ENCODE measurements at regions of chr15 and their contacts with region 1.

Region 1: GRCh38 chr15:101320501-101321052 is 25.5 kb upstream of the SNRPA1 start:
- DNase-seq: peak; percentile 64
- ATAC-seq: peak; percentile 90
- H3K4me3 Mint-ChIP-seq: peak overlapping the region; percentile 47; the same call in 1 of the 2 replicates
- H3K27ac Mint-ChIP-seq: no peak overlapping the region
- H3K4me1 Mint-ChIP-seq: peaks cover 6% of the 10 kb centered on the region
- H3K27me3 Mint-ChIP-seq: 0 out of 2 replicates have a peak, but pooled peaks cover 2% of the 10 kb centered on the region
- CTCF ChIP-seq: peak; percentile 42; the same call in 1 of the 2 replicates

Region 2: DNA sequence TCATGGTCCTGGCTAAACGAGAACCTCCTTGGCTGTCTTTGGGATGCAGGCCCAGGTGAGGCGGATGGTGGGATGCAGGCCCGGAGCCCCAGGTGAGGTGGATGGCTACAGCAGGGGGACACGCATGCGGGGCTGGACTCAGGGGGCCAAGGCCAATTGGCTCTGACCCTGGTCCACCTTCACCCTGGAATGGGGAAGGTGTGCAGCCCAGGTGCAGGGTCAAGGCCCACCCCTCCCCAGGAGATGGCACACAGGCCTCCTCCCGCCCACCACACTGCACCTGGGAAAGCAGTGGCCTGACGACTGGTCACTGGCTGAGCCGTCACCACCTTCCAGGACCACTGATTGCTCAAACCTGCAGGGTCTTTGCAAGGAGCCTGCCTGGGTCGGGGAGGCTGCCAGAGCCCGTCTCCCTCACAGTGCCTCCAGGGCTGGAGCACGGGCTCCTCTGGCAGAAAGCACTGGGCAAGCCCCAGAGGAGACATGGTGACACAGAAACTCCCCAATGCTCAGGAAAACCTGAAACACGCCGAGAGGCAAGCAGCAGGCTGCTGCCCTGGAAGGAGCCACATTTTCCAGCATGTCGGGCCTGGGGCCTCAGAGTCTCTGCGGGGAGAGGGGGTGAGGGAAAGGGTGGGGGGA is 241.8 kb before region 1 on chr15:
- CTCF ChIA-PET with region 1: no interaction called
- POLR2A ChIA-PET with region 1: no interaction called
- DNase-seq: no peak
- ATAC-seq: peak; percentile 10
- H3K4me3 Mint-ChIP-seq: no peak overlapping the region
- H3K27ac Mint-ChIP-seq: peak overlapping the region; percentile 99
- H3K4me1 Mint-ChIP-seq: peaks cover 60% of the 10 kb centered on the region
- H3K27me3 Mint-ChIP-seq: peaks cover 7% of the 10 kb centered on the region
- CTCF ChIP-seq: no peak

Region 3: DNA sequence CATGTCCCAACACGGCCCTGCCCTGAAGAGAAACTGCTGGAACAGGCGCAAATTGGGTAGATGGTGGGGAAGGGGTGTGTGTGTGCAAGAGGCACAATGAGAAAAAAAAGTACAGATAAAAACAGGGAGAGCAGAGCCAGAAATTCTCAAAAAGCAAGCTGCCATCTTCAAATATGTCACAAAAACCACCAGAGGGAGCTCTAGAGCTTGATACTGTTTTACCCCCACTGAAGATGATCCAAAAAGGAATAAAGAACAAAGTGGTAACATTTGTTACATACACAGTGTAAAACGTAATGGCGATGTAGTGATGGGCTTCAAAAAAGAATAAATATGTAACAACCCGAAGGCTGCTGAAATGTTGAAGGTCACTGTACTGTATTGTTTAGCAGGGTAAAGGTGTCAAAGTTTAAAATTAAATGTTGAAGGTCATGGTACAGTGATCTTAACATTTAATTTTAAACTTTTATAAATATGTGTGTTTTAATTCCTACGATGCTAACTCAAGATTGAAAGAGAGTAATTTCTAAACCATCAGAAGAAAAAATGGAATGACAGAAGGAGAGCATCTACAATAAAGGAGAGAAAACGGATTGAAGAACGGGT is 31.6 kb before region 1 on chr15:
- CTCF ChIA-PET with region 1: interaction called, 10 read pairs
- POLR2A ChIA-PET with region 1: no interaction called
- DNase-seq: no peak
- ATAC-seq: 0 out of 2 replicates have a peak, but pooled peaks have one; percentile 24
- H3K4me3 Mint-ChIP-seq: no peak overlapping the region
- H3K27ac Mint-ChIP-seq: no peak overlapping the region
- H3K4me1 Mint-ChIP-seq: peaks cover 10% of the 10 kb centered on the region
- H3K27me3 Mint-ChIP-seq: no peaks in the 10 kb centered on the region
- CTCF ChIP-seq: peak; percentile 64; the same call in 1 of the 2 replicates

Region 4: GRCh38 chr15:101332061-101332467 is 11.5 kb after region 1 on chr15:
- CTCF ChIA-PET with region 1: interaction called, 13 read pairs
- POLR2A ChIA-PET with region 1: no interaction called
- DNase-seq: no peak
- ATAC-seq: no peak
- H3K4me3 Mint-ChIP-seq: no peak overlapping the region
- H3K27ac Mint-ChIP-seq: no peak overlapping the region
- H3K4me1 Mint-ChIP-seq: no peaks in the 10 kb centered on the region
- H3K27me3 Mint-ChIP-seq: peaks cover 52% of the 10 kb centered on the region
- CTCF ChIP-seq: no peak

Region 5: GRCh38 chr15:101501703-101502373 is 181.3 kb after region 1 on chr15:
- CTCF ChIA-PET with region 1: interaction called, 19 read pairs
- POLR2A ChIA-PET with region 1: no interaction called
- DNase-seq: peak; percentile 66
- ATAC-seq: peak; percentile 91
- H3K4me3 Mint-ChIP-seq: no peak overlapping the region
- H3K27ac Mint-ChIP-seq: no peak overlapping the region
- H3K4me1 Mint-ChIP-seq: peaks cover 13% of the 10 kb centered on the region
- H3K27me3 Mint-ChIP-seq: no peaks in the 10 kb centered on the region; the same call in 1 of the 2 replicates
- CTCF ChIP-seq: 0 out of 2 replicates have a peak, but pooled peaks have one; percentile 27

Region 6: GRCh38 chr15:101654171-101654570 is 333.6 kb after region 1 on chr15:
- CTCF ChIA-PET with region 1: interaction called, 11 read pairs
- POLR2A ChIA-PET with region 1: no interaction called
- DNase-seq: no peak
- ATAC-seq: no peak
- H3K4me3 Mint-ChIP-seq: peak overlapping the region; percentile 29; the same call in 1 of the 2 replicates
- H3K27ac Mint-ChIP-seq: no peak overlapping the region
- H3K4me1 Mint-ChIP-seq: peaks cover 11% of the 10 kb centered on the region
- H3K27me3 Mint-ChIP-seq: no peaks in the 10 kb centered on the region
- CTCF ChIP-seq: no peak